Psoas muscle (tissue), 8 donors: ENCODE measurements at regions of chr12 and their contacts with region 1.

Region 1: DNA sequence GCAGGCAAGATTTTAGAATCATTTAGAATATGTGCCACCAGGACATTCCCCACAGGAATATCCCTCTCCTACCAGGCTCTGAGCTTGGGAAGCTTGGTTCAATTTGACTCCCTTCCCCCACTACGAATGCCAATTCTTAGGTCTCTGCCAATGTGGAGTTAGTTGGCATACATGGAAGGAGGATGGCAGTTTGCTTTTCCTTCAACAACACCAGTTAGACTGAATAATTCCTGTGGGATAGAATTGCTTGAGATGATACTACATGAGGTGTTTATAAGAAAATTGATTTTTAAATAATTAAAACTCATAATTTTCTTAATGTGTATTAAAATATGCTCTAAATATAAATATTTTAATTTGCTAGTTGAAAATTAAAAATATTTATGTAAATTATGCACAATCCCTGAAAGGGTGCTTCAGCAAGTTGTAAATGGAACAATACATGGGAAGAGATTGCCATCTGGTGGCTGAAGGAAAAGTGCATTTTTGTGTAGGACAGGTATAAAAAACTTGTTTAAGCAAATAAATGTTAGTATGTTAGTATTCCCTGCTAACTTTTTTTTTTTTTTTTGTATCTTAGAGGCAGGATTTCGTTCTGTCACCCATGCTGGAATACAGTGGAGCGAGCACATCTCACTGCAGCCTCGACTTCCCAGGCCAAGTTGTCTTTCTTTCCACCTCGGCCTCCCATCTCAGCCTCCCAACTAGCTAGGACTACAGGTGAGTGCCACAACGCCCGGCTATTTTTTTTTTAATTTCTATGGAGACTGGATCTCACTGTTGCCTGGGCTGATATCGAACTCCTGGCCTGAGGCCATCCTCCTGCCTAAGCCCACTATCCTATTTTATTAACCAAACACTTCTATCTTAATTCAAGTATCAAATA is 25.8 kb upstream of the STRAP start:
- DNase-seq: no peak
- ATAC-seq: peak; percentile 52 to 88 (median 66)
- H3K4me3 ChIP-seq: no peak overlapping the region
- H3K27ac ChIP-seq: no peak overlapping the region
- H3K4me1 ChIP-seq: no peaks in the 10 kb centered on the region
- H3K27me3 ChIP-seq: no peaks in the 10 kb centered on the region
- CTCF ChIP-seq: peak; percentile 91

Region 2: DNA sequence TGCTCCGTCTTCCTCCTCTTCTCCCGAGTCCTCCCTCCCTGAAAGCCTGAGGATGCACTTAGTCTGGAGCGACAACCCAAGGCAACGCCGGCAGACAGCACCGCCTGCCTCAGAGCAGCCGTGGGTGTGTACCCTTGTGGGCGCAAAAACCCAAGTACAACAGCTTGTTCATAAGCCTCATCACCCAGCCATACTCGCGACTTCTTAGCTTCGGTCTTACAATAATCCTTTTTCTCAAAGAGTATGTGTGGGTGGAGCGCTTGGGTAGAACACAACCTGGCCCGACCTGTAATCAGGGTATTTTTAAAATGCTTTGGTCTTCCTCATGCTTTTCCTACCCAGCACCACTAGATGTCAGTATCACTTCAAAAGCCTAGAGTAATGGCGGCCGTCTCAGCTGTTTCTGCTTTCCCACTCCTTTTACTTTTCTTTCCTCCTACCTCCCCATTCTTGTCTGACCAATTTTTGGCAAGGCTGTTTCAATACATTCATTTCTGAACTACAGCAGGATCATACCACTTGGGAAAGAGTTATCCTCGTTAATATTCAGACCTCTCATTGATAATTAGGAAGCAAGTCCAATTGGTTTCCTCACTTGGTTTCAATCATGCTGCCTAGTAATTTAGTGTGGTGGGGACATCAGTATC is 266.0 kb before region 1 on chr12:
- intact Hi-C with region 1: loop called (anchors 1 to 2 kb)
- DNase-seq: peak in 1 of 2 donors; percentile 49
- ATAC-seq: peak; percentile 83 to 98 (median 90)
- H3K4me3 ChIP-seq: peak overlapping the region; percentile 43
- H3K27ac ChIP-seq: no peak overlapping the region
- H3K4me1 ChIP-seq: no peaks in the 10 kb centered on the region
- H3K27me3 ChIP-seq: no peaks in the 10 kb centered on the region
- CTCF ChIP-seq: peak; percentile 89

Region 3: DNA sequence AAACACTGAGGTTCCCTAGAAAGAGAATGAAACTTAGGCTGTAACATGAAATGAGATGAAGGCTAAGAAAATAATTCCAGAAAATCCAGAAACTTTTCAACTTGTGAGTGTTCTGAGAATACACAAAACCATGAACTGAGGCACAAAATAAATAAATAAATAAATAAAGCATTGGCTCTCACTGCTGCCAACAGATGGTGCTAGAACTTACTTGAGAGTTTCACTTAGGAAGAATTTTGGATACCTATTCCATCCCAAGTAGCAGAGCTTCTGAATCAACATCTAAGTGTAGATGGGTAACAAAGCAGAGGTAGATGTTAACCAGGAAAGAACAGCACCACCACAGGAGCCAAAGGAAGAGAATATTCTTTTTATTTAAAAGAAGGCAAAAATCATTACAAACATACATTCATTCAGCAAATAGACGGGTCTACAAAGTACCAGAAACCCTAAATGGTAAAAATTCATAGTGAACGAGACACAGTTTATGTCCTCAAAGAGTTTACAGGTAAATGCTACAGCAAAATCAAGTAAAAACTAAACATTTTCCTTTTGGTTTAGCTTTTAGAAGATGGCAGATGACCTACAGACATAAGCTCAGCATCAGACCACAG is 83.8 kb before region 1 on chr12:
- intact Hi-C with region 1: loop called in 1 of 2 experiments (anchors 5 kb)
- DNase-seq: no peak
- ATAC-seq: peak in 2 of 4 donors; percentile 50 to 66
- H3K4me3 ChIP-seq: no peak overlapping the region
- H3K27ac ChIP-seq: no peak overlapping the region
- H3K4me1 ChIP-seq: peaks cover 5% of the 10 kb centered on the region
- H3K27me3 ChIP-seq: no peaks in the 10 kb centered on the region
- CTCF ChIP-seq: peak; percentile 53

Region 4: GRCh38 chr12:16228067-16228466 is 371.7 kb after region 1 on chr12:
- intact Hi-C with region 1: no loop called
- DNase-seq: no peak
- ATAC-seq: no peak
- H3K4me3 ChIP-seq: no peak overlapping the region
- H3K27ac ChIP-seq: no peak overlapping the region
- H3K4me1 ChIP-seq: no peaks in the 10 kb centered on the region
- H3K27me3 ChIP-seq: no peaks in the 10 kb centered on the region
- CTCF ChIP-seq: no peak